Naive thymus-derived CD4-positive, alpha-beta T cell (primary cell): ENCODE measurements at regions of chr2 and their contacts with region 1.

Region 1: GRCh38 chr2:47782671-47783485 is at the start of gene MSH6:
- DNase-seq: peak; percentile 85 to 93 (median 92)
- ATAC-seq: peak; percentile 97
- H3K4me3 ChIP-seq: peak within 1 kb of the TSS; percentile 97
- H3K4me3 Mint-ChIP-seq: peak within 1 kb of the TSS; percentile 70 to 97 (median 92)
- H3K27ac ChIP-seq: peak within 1 kb of the TSS; percentile 94
- H3K27ac Mint-ChIP-seq: peak within 1 kb of the TSS; percentile 62 to 93 (median 87)
- H3K4me1 ChIP-seq: peaks cover 5 to 8% of the 10 kb centered on the region in 2 donors
- H3K4me1 Mint-ChIP-seq: peaks cover 7 to 39% (median 24%) of the 10 kb centered on the region in 7 donors
- H3K27me3 ChIP-seq: no peaks in the 10 kb centered on the region
- H3K27me3 Mint-ChIP-seq: no peaks in the 10 kb centered on the region
- total RNA-seq, gene MSH6: 20.5 to 82.3 (median 41.8) TPM

Region 2: DNA sequence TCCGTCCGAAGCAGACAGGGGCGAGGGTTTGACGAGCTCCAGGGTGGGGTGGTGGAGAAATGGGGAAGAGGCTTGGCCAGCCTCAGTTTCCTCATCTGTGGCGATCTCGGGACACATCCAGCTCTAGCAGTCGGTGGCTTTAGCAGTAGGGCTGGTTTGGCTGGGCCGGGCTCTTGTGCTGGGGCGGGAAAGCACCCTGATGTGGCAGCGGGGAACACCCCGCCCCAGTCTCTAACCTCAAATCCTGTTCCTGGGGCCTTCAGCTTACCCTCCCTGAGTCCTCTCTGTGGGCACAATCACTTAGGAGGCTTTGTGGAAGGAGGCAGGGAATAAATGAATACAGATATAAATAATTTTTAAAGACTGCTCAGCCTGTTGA is 840.8 kb before region 1 on chr2:
- CTCF ChIA-PET with region 1: no interaction called
- POLR2A ChIA-PET with region 1: no interaction called
- intact Hi-C with region 1: loop called in 1 of 2 experiments (anchors 2 kb)
- DNase-seq: peak; percentile 53 to 79 (median 56)
- ATAC-seq: peak; percentile 68
- H3K4me3 ChIP-seq: peak overlapping the region; percentile 93
- H3K4me3 Mint-ChIP-seq: peak overlapping the region; percentile 90 to 100 (median 98)
- H3K27ac ChIP-seq: peak overlapping the region; percentile 94
- H3K27ac Mint-ChIP-seq: peak overlapping the region; percentile 89 to 99 (median 97)
- H3K4me1 ChIP-seq: peaks cover 22 to 43% of the 10 kb centered on the region in 2 donors
- H3K4me1 Mint-ChIP-seq: peaks cover 24 to 73% (median 64%) of the 10 kb centered on the region in 7 donors
- H3K27me3 ChIP-seq: no peaks in the 10 kb centered on the region
- H3K27me3 Mint-ChIP-seq: no peaks in the 10 kb centered on the region

Region 3: DNA sequence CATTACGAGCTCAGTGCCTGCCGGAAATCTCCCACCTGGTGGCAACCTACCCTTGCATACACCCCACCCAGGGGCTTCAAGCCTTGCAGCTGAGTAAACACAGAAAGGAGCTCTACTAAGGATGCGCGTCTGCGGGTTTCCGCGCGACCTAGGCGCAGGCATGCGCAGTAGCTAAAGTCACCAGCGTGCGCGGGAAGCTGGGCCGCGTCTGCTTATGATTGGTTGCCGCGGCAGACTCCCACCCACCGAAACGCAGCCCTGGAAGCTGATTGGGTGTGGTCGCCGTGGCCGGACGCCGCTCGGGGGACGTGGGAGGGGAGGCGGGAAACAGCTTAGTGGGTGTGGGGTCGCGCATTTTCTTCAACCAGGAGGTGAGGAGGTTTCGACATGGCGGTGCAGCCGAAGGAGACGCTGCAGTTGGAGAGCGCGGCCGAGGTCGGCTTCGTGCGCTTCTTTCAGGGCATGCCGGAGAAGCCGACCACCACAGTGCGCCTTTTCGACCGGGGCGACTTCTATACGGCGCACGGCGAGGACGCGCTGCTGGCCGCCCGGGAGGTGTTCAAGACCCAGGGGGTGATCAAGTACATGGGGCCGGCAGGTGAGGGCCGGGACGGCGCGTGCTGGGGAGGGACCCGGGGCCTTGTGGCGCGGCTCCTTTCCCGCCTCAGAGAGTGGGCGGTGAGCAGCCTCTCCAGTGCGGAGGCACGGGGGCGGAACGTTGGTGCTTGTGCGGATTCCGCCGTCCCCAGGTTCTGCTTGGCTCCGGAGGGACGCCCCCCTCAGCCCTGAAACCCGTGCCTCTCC is 379.9 kb before region 1 on chr2 and contains the start of gene MSH2:
- CTCF ChIA-PET with region 1: no interaction called
- POLR2A ChIA-PET with region 1: interaction called, 4 read pairs
- intact Hi-C with region 1: loop called (anchors 1 kb)
- DNase-seq: peak; percentile 72 to 94 (median 91)
- ATAC-seq: peak; percentile 97
- H3K4me3 ChIP-seq: peak within 1 kb of the TSS; percentile 90
- H3K4me3 Mint-ChIP-seq: peak within 1 kb of the TSS; percentile 90 to 100 (median 98)
- H3K27ac ChIP-seq: peak within 1 kb of the TSS; percentile 77
- H3K27ac Mint-ChIP-seq: peak within 1 kb of the TSS; percentile 81 to 96 (median 91)
- H3K4me1 ChIP-seq: peaks cover 9 to 12% of the 10 kb centered on the region in 2 donors
- H3K4me1 Mint-ChIP-seq: peaks cover 32 to 49% (median 40%) of the 10 kb centered on the region in 7 donors
- H3K27me3 ChIP-seq: no peaks in the 10 kb centered on the region
- H3K27me3 Mint-ChIP-seq: peaks cover 0 to 2% (median 0%) of the 10 kb centered on the region in 5 donors
- total RNA-seq, gene MSH2: 12.2 to 44.7 (median 31.4) TPM

Region 4: GRCh38 chr2:47520825-47521665 is 261.8 kb before region 1 on chr2:
- CTCF ChIA-PET with region 1: no interaction called
- POLR2A ChIA-PET with region 1: no interaction called
- intact Hi-C with region 1: loop called (anchors 1 kb)
- DNase-seq: peak; percentile 43 to 79 (median 63)
- ATAC-seq: peak; percentile 91
- H3K4me3 ChIP-seq: peak overlapping the region; percentile 74
- H3K4me3 Mint-ChIP-seq: peak overlapping the region; percentile 90 to 99 (median 95)
- H3K27ac ChIP-seq: peak overlapping the region; percentile 15
- H3K27ac Mint-ChIP-seq: peak overlapping the region; percentile 82 to 96 (median 90)
- H3K4me1 ChIP-seq: peaks cover 0 to 4% of the 10 kb centered on the region in 2 donors
- H3K4me1 Mint-ChIP-seq: peaks cover 5 to 21% (median 20%) of the 10 kb centered on the region in 7 donors
- H3K27me3 ChIP-seq: no peaks in the 10 kb centered on the region
- H3K27me3 Mint-ChIP-seq: peaks cover 0 to 4% (median 0%) of the 10 kb centered on the region in 5 donors

Region 5: DNA sequence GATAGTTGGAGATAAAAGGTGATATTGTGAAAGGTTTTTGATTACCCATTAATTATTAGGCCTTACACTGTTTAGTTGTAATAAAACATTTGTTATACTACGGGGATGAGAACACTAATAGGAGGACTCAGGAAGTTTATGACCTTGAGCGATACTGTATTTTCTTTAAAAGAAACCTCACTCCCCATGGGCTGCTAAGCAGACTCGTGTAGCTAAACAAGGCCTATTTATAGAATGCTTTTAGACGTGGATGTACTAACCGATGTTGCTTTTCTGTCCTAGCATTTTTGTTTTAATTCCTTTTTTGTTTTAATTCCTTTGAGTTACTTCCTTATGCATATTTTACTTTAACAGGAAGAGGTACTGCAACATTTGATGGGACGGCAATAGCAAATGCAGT is 23.0 kb after region 1 on chr2:
- CTCF ChIA-PET with region 1: no interaction called
- POLR2A ChIA-PET with region 1: interaction called, 3 read pairs
- intact Hi-C with region 1: loop called in 1 of 2 experiments (anchors 2 kb)
- DNase-seq: no peak
- ATAC-seq: no peak
- H3K4me3 ChIP-seq: no peak overlapping the region
- H3K4me3 Mint-ChIP-seq: no peak overlapping the region
- H3K27ac ChIP-seq: no peak overlapping the region
- H3K27ac Mint-ChIP-seq: peak overlapping the region in 1 of 9 donors; percentile 12
- H3K4me1 ChIP-seq: no peaks in the 10 kb centered on the region
- H3K4me1 Mint-ChIP-seq: peaks cover 0 to 7% (median 0%) of the 10 kb centered on the region in 7 donors
- H3K27me3 ChIP-seq: no peaks in the 10 kb centered on the region
- H3K27me3 Mint-ChIP-seq: no peaks in the 10 kb centered on the region